Activated naive CD4-positive, alpha-beta T cell treated with anti-CD3 and anti-CD28 coated beads, Interleukin-2, amount 10 ng/mL, durations not matched to agents 7 days and 5 days (primary cell): ENCODE measurements at regions of chr6 and their contacts with region 1.

Region 1: GRCh38 chr6:106141441-106142237 is 55.5 kb downstream of the PRDM1 start:
- DNase-seq: peak; percentile 73
- H3K4me3 Mint-ChIP-seq: peak overlapping the region; percentile 6
- H3K27ac Mint-ChIP-seq: peak overlapping the region; percentile 96
- H3K4me1 Mint-ChIP-seq: peaks cover 56% of the 10 kb centered on the region
- H3K27me3 Mint-ChIP-seq: peaks cover 8% of the 10 kb centered on the region

Region 2: DNA sequence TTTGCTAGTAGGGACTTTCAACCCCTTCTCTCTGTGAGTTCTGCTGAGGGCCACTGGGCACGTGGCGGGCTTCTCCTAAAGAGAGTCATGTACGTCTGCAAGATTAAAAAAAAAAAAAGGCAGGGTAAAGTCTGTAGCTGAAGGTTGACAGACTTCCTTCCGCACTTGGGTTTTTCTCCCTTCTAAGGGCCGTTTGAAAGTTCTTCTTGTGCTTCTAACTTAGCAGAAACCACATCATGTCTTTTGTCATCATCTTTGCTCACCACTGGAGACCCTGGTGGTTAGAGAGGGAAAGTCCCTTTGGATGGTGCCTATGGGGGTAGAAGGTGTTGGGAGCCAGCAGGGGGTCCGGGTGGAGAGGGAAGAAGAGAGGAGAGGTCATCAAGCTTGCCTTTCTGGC is 24.1 kb before region 1 on chr6:
- CTCF ChIA-PET with region 1: interaction called, 16 read pairs
- DNase-seq: peak; percentile 70
- H3K4me3 Mint-ChIP-seq: no peak overlapping the region
- H3K27ac Mint-ChIP-seq: peak overlapping the region; percentile 47
- H3K4me1 Mint-ChIP-seq: peaks cover 71% of the 10 kb centered on the region
- H3K27me3 Mint-ChIP-seq: peaks cover 57% of the 10 kb centered on the region

Region 3: GRCh38 chr6:106163446-106163965 is 21.9 kb after region 1 on chr6:
- CTCF ChIA-PET with region 1: interaction called, 16 read pairs
- DNase-seq: peak; percentile 66
- H3K4me3 Mint-ChIP-seq: no peak overlapping the region
- H3K27ac Mint-ChIP-seq: peak overlapping the region; percentile 79
- H3K4me1 Mint-ChIP-seq: peaks cover 41% of the 10 kb centered on the region
- H3K27me3 Mint-ChIP-seq: no peaks in the 10 kb centered on the region